Activated naive CD4-positive, alpha-beta T cell treated with anti-CD3 and anti-CD28 coated beads, Interleukin-2, amount 10 ng/mL, durations not matched to agents 7 days and 5 days (primary cell): ENCODE measurements at regions of chr12 and their contacts with region 1.

Region 1: DNA sequence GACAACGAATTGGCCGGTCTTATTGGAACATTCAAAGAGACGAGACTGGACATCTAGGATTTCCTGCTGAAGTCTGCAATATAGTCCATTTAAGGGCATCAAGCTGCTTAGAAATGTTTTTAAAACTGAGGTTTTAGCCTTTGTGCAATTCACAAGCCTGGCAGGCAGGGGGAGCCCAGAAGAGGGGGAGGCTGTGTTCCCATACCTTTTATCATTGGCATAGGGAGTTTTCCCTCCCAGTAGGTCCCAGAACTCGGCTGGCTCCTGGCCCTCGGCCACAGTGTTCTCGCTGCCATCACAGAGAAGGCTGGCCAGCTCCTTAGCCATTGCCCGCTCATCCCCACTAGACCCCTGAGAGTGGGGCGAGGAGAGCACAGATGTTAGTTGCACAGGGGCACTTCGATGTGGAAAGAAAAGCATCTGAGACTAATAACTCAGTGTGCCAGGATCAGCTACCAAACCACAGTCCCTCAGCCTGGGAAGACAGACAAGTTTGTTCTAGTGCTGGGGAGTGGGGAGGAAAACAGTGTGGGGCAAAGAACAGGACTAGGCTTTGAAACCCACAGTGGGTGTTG is 15.1 kb downstream of the AVIL start:
- DNase-seq: peak; percentile 60
- H3K4me3 Mint-ChIP-seq: no peak overlapping the region
- H3K27ac Mint-ChIP-seq: no peak overlapping the region
- H3K4me1 Mint-ChIP-seq: no peaks in the 10 kb centered on the region
- H3K27me3 Mint-ChIP-seq: no peaks in the 10 kb centered on the region

Region 2: DNA sequence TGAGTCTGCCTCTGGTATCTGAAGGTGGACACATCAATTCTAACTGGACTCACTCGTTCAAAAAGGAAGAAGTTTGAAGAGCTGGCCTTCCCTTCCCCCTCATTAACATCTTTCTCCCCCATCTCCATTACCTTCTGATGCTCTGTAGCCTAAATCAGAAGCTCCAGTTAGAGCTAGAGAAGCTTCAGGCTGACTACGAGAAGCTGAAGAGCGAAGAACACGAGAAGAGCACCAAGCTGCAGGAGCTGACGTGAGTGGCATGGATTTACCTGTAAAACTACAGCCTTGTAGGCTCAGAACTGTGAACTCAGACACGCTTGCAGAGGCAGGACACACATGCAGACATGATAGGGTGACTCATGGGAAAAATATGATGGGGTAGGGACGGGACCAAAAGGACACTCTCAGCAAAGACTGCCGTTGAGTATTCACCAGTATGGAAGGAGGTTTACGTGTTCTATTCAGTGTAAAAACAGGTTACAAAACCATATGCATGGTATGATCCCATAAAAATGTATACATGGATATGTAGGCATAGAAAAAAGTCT is 226.7 kb before region 1 on chr12:
- CTCF ChIA-PET with region 1: no interaction called
- DNase-seq: no peak
- H3K4me3 Mint-ChIP-seq: no peak overlapping the region
- H3K27ac Mint-ChIP-seq: no peak overlapping the region
- H3K4me1 Mint-ChIP-seq: no peaks in the 10 kb centered on the region
- H3K27me3 Mint-ChIP-seq: peaks cover 24% of the 10 kb centered on the region

Region 3: GRCh38 chr12:57816855-57817151 is 13.4 kb after region 1 on chr12:
- CTCF ChIA-PET with region 1: interaction called, 13 read pairs
- DNase-seq: no peak
- H3K4me3 Mint-ChIP-seq: no peak overlapping the region
- H3K27ac Mint-ChIP-seq: no peak overlapping the region
- H3K4me1 Mint-ChIP-seq: no peaks in the 10 kb centered on the region
- H3K27me3 Mint-ChIP-seq: no peaks in the 10 kb centered on the region